Common myeloid progenitor, CD34-positive (primary cell): ENCODE measurements at regions of chr1 and their contacts with region 1.

Region 1: GRCh38 chr1:72037745-72038343 is 244.5 kb downstream of the NEGR1 start:
- DNase-seq: peak; percentile 66 to 76 (median 71)
- H3K4me3 ChIP-seq: no peak overlapping the region
- H3K27ac ChIP-seq: no peak overlapping the region
- H3K4me1 ChIP-seq: peaks cover 0 to 12% (median 2%) of the 10 kb centered on the region in 4 experiments
- H3K27me3 ChIP-seq: no peaks in the 10 kb centered on the region

Region 2: DNA sequence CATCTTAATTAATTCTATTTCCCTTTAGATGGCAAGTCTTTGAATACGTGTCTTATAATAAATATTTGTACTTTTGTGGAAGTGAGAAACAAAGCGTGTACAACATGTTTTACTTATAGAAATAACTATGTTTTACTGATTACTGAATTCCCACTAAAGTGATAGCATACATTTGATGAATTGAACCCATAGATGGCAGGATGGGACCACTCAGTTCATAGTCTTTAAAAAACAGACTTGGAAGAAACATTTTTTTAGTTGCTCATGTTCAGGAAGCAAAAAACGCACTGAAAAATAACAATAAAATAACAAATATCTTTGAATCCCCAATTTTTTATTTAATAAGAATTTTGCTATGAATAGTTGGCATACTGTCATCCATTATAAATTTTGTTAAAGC is 449.9 kb before region 1 on chr1:
- CTCF ChIA-PET with region 1: interaction called, 23 read pairs
- POLR2A ChIA-PET with region 1: interaction called, 4 read pairs
- DNase-seq: peak; percentile 59 to 83 (median 77)
- H3K4me3 ChIP-seq: no peak overlapping the region
- H3K27ac ChIP-seq: no peak overlapping the region
- H3K4me1 ChIP-seq: peaks cover 0 to 6% (median 4%) of the 10 kb centered on the region in 4 experiments
- H3K27me3 ChIP-seq: no peaks in the 10 kb centered on the region